HepG2 (cell line): ENCODE measurements at regions of chr1 and their contacts with region 1.

Region 1: GRCh38 chr1:119779869-119780356 is 11.2 kb upstream of the HMGCS2 start:
- DNase-seq: no peak
- ATAC-seq: peak; percentile 72
- H3K4me3 ChIP-seq: peak overlapping the region; percentile 12 to 49 (median 39)
- H3K27ac ChIP-seq: peak overlapping the region; percentile 69
- H3K4me1 ChIP-seq: peaks cover 88% of the 10 kb centered on the region
- H3K27me3 ChIP-seq: no peaks in the 10 kb centered on the region
- CTCF ChIP-seq: no peak
- EP300 ChIP-seq: 0 out of 4 replicates have a peak, but pooled peaks of 1 of the 2 experiments have one; percentile 23
- POLR2A ChIP-seq: no peak
- RAD21 ChIP-seq: no peak

Region 2: DNA sequence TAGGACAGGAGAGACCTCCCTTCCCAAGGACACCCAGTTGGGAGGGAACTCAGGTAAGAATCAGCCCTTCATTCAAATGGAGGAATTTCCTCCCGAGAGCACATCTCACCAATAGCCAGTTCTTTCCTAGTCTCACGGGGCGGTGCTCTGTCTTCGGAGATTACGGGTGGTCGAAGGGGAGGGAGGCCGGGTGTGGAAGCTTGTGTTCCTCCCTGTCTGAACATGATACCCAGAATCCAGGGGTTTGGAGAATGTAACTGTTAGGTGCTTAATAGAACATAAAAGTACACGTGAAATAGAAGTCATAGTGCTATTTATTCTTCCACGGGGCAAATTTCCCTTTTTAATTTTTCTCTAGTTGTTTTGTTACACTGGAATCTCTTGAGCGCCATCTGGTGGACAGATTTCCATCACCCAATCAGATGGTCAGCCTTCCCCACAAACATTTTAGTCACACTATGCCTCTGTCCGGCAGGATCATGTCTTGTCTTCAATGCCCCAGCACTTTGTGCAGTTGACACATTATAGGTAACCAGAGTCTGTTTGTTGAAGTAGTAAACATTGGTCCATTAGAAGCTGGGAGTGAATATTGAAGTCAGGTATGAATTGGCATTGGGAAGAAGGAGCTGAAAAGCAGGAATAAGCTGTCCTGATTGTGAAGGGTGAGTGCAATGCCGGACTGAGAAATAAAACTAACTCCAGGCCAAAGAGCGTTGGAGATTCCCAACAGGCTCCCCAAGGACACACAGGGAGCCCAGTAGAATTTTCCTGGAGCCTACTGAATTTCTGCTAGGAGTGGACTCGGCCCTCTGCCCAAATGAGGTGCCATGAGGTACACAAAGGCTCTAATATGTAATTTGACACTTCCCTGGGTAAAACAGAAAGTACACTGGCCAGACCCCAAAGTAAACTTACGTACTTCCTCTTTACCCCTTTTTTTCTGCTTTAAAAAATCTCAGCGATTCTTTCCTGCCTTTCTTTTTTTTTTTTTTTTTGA is 104.3 kb before region 1 on chr1:
- CTCF ChIA-PET with region 1: no interaction called
- POLR2A ChIA-PET with region 1: no interaction called
- in situ Hi-C with region 1: no loop called
- intact Hi-C with region 1: no loop called
- DNase-seq: peak; percentile 82
- ATAC-seq: peak; percentile 86
- H3K4me3 ChIP-seq: peak overlapping the region; percentile 43 to 63 (median 57)
- H3K27ac ChIP-seq: no peak overlapping the region
- H3K4me1 ChIP-seq: peaks cover 39% of the 10 kb centered on the region
- H3K27me3 ChIP-seq: no peaks in the 10 kb centered on the region; a peak in 1 of 5 replicates
- CTCF ChIP-seq: peak; percentile 79
- EP300 ChIP-seq: no peak
- POLR2A ChIP-seq: no peak
- RAD21 ChIP-seq: peak; percentile 33; the same call in 1 of the 2 replicates

Region 3: GRCh38 chr1:119766374-119766794 is 13.5 kb before region 1 on chr1:
- CTCF ChIA-PET with region 1: no interaction called
- POLR2A ChIA-PET with region 1: interaction called, 71 read pairs
- in situ Hi-C with region 1: no loop called
- intact Hi-C with region 1: loop called (anchors 2 kb)
- DNase-seq: peak; percentile 93
- ATAC-seq: peak; percentile 94
- H3K4me3 ChIP-seq: peak overlapping the region; percentile 20 to 41 (median 23); a peak in 4 of 6 replicates
- H3K27ac ChIP-seq: peak overlapping the region; percentile 75
- H3K4me1 ChIP-seq: peaks cover 73% of the 10 kb centered on the region
- H3K27me3 ChIP-seq: peaks cover 0 to 2% of the 10 kb centered on the region in 2 experiments; a peak in 1 of 5 replicates
- CTCF ChIP-seq: no peak
- EP300 ChIP-seq: peak; percentile 33 to 91; a peak in 3 of 4 replicates
- POLR2A ChIP-seq: 0 out of 4 replicates have a peak, but pooled peaks of 1 of the 2 experiments have one; percentile 37
- RAD21 ChIP-seq: no peak

Region 4: DNA sequence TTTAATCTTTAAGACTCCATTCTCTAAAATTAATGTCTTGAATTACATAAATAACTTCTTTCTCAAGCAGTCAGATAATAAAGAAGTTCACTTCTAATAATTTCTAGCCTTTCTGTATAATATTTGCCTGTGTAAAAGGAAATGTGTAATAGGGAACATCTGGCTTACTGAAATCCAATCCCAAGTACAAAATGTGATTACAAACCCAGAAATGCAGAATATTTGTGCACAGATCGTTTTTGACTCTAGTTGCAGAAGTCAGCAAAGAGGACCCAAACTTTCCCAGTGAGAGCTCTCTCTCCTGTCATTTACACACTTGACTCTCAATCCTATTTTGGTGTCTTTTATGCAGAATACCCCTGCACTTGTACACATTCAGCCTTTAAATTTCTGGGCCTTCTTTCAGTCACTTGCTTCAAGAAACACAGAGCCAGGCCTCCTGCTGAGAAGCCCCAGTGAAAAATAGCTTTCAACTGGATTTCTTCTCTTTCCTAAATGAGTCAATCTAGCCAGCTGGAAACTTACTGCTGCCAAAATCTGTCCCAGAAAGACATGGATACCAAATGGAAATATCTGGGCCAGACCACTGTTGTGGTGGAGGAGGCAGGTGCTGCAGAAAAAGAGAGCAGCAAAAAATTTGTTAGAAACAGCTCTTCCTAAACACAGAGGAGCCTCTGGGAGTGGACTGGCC is 184.9 kb after region 1 on chr1:
- CTCF ChIA-PET with region 1: no interaction called
- POLR2A ChIA-PET with region 1: no interaction called
- in situ Hi-C with region 1: no loop called
- intact Hi-C with region 1: no loop called
- DNase-seq: no peak
- ATAC-seq: no peak
- H3K4me3 ChIP-seq: no peak overlapping the region
- H3K27ac ChIP-seq: no peak overlapping the region
- H3K4me1 ChIP-seq: peaks cover 26% of the 10 kb centered on the region
- H3K27me3 ChIP-seq: no peaks in the 10 kb centered on the region
- CTCF ChIP-seq: no peak
- EP300 ChIP-seq: no peak
- POLR2A ChIP-seq: no peak
- RAD21 ChIP-seq: no peak